Heart left ventricle (tissue), 16 donors: ENCODE measurements at regions of chr11 and their contacts with region 1.

Region 1: DNA sequence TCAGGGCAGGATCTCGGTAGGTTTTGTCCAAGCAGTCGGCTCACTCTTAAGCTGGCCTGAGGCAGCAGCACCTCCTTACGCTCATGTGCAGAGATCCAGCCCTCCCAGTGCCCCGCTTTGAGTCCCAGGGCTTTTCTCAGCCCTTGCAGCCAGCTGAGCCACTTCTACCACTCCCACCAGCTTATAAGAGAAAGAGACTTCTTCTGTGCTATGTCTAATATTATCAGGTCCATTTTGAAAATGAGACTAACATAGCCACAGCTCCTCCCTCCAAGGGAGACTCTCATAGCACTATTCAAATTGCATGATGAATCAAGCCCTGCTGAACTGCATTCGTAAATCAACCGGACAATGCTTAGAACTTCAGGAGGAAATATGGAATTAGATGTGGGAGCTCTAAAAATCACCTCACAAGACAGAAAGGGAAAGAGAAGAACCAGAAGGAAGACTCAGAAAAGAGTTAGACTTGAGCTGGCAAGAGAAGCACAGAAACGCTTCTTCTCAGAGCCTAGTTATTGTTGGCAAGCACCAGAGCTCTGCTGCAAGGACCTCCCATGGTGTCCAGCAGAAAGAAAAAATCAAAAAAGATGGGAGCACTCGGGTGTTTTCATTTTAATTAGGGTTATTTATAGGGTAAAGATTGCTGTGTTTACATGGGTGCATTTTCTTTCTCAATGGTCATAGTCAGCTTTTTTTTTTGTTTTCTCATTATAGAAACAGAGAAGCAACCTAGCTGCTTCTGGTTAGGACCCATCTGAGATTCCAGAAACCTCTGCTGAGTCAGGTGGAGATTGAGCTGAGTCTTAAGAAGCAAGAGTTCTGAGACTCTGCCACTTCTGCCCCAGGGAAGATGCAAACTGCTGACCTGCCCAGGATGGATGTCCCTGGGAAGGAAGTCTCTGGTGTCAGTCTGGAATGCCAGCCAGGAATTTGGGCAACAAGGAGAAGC is 181.4 kb downstream of the ETS1 start:
- DNase-seq: peak in 1 of 5 donors; percentile 30
- ATAC-seq: peak in 2 of 4 donors; percentile 37 to 45
- H3K4me3 ChIP-seq: peak overlapping the region in 3 of 12 donors; percentile 4 to 31 (median 17)
- H3K27ac ChIP-seq: peak overlapping the region in 4 of 12 donors; percentile 23 to 44 (median 40)
- H3K4me1 ChIP-seq: peaks cover 0 to 38% (median 11%) of the 10 kb centered on the region in 12 donors
- H3K27me3 ChIP-seq: no peaks in the 10 kb centered on the region
- CTCF ChIP-seq: no peak
- POLR2A ChIP-seq: no peak

Region 2: DNA sequence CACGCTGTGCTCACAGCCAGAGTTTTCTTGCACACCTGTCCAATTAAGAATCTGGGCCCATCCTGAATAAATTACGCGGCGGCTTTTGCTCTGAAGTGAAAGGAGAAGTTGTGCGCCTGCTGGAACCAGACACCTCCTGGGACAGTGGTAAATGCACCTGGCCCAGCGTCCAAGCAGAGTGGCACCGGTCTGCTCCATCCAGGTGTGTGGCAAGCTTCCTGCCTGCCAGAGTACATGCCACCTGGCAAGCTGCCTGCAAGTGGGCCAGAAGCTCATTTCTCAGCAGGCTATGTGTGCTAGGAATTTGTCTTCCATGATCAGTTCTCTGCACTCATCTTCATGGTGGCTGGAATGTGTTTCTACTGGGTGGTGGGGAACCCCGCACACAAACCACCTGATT is 479.3 kb before region 1 on chr11:
- intact Hi-C with region 1: no loop called
- DNase-seq: no peak
- ATAC-seq: no peak
- H3K4me3 ChIP-seq: no peak overlapping the region
- H3K27ac ChIP-seq: no peak overlapping the region
- H3K4me1 ChIP-seq: no peaks in the 10 kb centered on the region
- H3K27me3 ChIP-seq: peaks cover 0 to 4% (median 0%) of the 10 kb centered on the region in 9 donors
- CTCF ChIP-seq: no peak
- POLR2A ChIP-seq: no peak

Region 3: GRCh38 chr11:128354476-128354875 is 51.5 kb before region 1 on chr11:
- intact Hi-C with region 1: loop called in 1 of 10 experiments (anchors 5 kb)
- DNase-seq: no peak
- ATAC-seq: no peak
- H3K4me3 ChIP-seq: no peak overlapping the region
- H3K27ac ChIP-seq: no peak overlapping the region
- H3K4me1 ChIP-seq: peaks cover 0 to 12% (median 0%) of the 10 kb centered on the region in 12 donors
- H3K27me3 ChIP-seq: no peaks in the 10 kb centered on the region
- CTCF ChIP-seq: no peak
- POLR2A ChIP-seq: no peak